Dorsolateral prefrontal cortex (tissue), 120 donors: ENCODE measurements at regions of chr7 and their contacts with region 1.

Region 1: DNA sequence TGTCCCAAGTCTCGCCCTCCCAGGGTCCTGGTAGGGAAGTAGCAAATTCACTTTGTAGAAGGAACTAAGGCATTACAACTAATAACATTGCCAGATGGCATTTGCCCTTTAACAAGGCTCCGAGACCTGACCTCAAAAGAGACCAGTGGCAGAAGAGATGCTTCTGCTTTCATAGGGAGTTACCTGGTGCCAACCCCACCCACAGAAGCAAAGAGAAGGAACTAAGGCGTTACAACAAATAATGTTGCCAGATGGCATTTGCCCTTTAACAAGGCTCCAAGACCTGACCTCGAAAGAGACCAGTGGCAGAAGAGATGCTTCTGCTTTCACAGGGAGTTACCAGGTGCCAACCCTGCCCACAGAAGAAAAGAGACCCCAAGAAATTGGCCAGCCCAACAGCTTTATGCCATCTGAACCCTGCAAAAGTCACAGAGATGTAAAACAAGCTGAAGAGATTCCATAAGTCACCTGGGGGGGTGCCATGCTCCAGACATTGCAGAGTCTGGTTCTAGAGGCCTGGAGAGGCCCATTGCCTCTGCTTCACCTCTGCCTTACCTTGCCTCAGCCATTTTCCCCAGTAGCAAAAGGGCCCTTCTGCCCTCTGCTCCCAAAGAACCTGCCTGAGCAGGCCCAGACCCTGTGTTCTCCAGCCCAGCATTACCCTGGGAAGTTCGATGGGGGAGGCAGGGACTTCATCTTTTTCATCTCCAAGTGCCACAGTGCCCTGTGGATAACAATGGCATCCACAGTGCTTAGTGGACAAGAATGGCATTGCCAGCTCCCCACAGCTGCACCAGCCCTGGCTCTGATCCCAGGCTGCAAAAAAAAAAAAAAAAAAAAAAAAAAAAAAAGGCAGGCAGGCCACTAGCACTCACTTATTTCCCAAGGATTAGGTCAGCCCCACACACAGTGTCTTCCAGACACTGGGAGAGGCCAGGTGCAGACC is 179.5 kb upstream of the PLXNA4 start:
- DNase-seq: peak in 8 of 10 donors; percentile 54 to 77 (median 65)
- H3K4me3 ChIP-seq: no peak overlapping the region
- H3K27ac ChIP-seq: peak overlapping the region in 46 of 59 donors; percentile 9 to 87 (median 64)
- H3K27me3 ChIP-seq: no peaks in the 10 kb centered on the region
- CTCF ChIP-seq: peak in 33 of 56 donors; percentile 12 to 57 (median 32)

Region 2: DNA sequence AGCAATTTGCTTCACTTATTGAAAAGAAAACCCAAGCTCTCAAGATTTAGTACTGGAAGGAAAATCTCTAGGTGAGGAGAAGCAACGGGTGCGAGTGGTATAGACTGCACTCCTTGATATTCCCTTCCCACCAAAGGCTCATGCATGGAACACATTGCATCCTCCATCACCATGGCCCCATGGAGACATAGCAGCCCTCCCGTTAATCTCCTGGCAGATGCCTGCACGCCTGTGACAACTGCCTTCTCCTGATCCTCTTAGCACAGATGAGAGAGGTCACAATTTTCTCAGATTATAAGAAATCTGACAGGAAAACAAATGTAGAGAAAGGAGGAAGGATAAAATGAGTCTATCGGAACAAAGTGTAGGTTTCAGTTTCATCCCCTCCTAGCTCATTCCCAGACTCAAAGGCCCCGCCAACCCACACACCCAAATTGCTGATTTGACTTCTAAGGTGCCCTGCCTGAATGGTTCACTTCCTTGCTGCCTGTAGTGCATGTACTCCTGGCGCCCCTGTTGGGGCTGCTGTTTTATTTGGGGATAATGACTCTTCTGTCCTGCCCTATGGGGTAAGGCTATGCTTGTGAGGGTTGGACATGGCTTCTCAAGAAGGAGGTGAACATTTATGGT is 229.6 kb before region 1 on chr7:
- intact Hi-C with region 1: no loop called
- DNase-seq: no peak
- H3K4me3 ChIP-seq: no peak overlapping the region
- H3K27ac ChIP-seq: no peak overlapping the region
- H3K27me3 ChIP-seq: peaks cover 0 to 4% (median 0%) of the 10 kb centered on the region in 45 donors
- CTCF ChIP-seq: no peak

Region 3: DNA sequence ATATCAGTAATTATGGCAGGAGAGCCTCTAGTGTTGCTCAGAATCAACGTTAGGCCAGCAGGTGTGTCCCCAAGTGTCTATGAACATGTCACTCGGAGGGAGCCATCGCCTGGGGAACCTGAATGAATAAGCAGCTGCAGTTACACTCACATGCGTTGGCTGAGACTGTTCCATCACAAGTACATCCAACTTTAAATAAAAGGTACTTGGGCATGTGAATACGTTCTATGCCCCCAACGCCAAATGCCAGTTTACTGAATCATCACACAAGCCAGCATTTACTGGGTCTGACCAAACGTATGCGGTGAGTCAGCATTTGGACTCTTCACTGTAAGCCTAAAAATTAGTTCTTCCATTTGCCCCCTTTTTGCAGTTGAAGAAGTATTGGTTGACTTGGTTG is 28.0 kb after region 1 on chr7:
- intact Hi-C with region 1: no loop called
- DNase-seq: peak in 1 of 10 donors; percentile 17
- H3K4me3 ChIP-seq: no peak overlapping the region
- H3K27ac ChIP-seq: no peak overlapping the region
- H3K27me3 ChIP-seq: no peaks in the 10 kb centered on the region
- CTCF ChIP-seq: no peak

Region 4: GRCh38 chr7:132825932-132826835 is 70.4 kb after region 1 on chr7:
- intact Hi-C with region 1: loop called in 1 of 2 experiments (anchors 5 kb)
- DNase-seq: peak in 2 of 10 donors; percentile 24 to 58
- H3K4me3 ChIP-seq: peak overlapping the region in 3 of 59 donors; percentile 3 to 21 (median 17)
- H3K27ac ChIP-seq: peak overlapping the region in 51 of 59 donors; percentile 3 to 83 (median 64)
- H3K27me3 ChIP-seq: no peaks in the 10 kb centered on the region
- CTCF ChIP-seq: no peak

Region 5: DNA sequence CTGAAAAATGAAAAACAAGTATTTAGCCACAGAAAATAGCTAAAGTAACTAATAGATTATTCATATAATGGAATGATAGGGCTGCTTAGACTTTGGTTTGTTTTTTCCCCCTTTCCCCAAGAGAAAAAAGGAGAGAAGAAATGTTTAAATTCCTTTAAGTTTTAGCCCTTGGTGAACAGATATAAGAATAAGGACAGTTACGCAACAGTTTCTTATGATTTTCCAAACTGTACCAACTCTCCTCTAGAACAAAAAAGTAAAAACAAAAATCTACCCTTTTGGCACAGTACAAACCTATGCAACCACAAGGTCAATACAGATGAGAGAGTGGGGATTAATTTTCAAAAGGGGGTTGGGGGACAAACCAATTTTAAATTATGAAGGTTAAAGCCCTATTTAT is 98.4 kb after region 1 on chr7:
- intact Hi-C with region 1: no loop called
- DNase-seq: no peak
- H3K4me3 ChIP-seq: no peak overlapping the region
- H3K27ac ChIP-seq: no peak overlapping the region
- H3K27me3 ChIP-seq: no peaks in the 10 kb centered on the region
- CTCF ChIP-seq: no peak

Region 6: DNA sequence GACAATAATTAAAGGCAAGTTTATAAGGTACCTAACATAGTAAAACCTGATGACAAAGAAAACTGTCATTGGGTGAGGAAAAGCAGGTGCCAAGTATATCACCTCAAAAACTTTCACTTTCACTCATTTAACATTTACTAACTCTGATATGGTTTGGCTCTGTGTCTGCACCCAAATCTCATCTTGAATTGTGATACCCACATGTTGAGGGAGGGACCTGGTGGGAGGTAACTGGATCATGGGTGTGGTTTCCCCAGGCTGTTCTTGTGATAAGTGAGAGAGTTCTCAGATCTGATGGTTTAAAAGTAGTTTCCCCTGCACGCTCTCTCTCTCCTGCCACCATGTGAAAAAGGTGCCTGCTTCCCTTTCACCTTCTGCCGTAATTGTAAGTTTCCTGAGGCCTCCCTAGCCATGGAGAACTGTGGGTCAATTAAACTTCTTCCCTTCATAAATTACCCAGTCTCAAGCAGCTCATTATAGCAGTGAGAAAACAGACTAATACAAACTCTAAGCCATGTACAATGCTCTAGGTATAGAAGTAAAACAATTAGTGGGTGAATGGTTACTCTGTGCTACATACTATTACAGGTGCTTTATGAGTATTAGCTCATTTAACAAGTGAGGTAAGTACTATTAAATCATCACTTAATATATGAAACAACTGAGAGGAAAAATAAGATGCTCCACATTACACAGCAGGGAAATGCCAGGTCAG is 127.1 kb after region 1 on chr7:
- intact Hi-C with region 1: no loop called
- DNase-seq: no peak
- H3K4me3 ChIP-seq: no peak overlapping the region
- H3K27ac ChIP-seq: no peak overlapping the region
- H3K27me3 ChIP-seq: no peaks in the 10 kb centered on the region
- CTCF ChIP-seq: no peak